Ascending aorta (tissue), 2 donors: ENCODE measurements at regions of chr20 and their contacts with region 1.

Region 1: GRCh38 chr20:63707549-63708300 is at the starts of genes ARFRP1 and ZGPAT:
- DNase-seq: peak in 1 of 2 donors; percentile 94
- H3K4me3 ChIP-seq: peak within 1 kb of the TSS; percentile 80 to 88
- H3K27ac ChIP-seq: peak within 1 kb of the TSS; percentile 86 to 94
- H3K4me1 ChIP-seq: peaks cover 6 to 14% of the 10 kb centered on the region in 2 donors
- H3K27me3 ChIP-seq: no peaks in the 10 kb centered on the region
- CTCF ChIP-seq: no peak
- total RNA-seq, gene ARFRP1: 50.8 TPM
- total RNA-seq, gene ZGPAT: 42.4 TPM

Region 2: DNA sequence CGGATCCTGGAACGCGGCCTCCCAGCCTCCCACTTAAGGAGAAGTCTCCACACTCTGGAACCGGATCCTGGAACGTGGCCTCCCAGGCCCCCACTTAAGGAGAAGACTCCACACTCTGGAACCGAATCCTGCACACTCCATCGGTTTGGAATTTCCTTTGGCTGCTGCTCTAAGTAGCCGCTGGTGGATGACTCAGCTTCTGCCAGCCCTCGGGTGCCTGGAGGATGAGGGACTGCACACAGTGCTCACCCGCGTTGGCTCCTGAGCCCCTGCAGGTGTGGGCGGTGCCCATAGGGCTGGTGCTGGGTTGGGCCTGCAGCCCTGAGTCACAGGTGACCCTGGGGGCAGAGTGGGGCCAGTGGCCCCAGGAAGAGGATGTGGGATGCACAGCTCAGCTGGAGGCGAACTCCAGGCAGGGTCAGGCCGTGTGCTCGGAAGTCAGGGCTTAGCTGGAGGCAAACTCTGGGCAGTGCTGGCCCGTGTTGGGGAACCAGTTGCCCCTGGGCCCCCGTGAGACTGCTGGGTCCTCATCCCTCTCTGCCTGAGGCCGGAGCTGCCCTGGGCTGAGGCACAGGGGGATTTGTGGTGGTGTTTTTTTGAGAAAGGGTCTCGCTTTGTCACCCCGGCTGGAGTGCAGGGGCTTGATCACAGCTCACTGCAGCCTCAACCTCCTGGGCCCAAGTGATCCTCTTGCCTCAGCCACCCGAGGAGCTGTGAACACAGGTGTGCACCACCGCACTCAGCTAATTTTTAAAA is 25.2 kb before region 1 on chr20:
- intact Hi-C with region 1: loop called (anchors 2 kb)
- DNase-seq: peak; percentile 79 to 93
- H3K4me3 ChIP-seq: peak overlapping the region in 1 of 2 donors; percentile 29
- H3K27ac ChIP-seq: peak overlapping the region; percentile 90 to 98
- H3K4me1 ChIP-seq: peaks cover 11 to 31% of the 10 kb centered on the region in 2 donors
- H3K27me3 ChIP-seq: no peaks in the 10 kb centered on the region
- CTCF ChIP-seq: no peak

Region 3: GRCh38 chr20:63692669-63693426 is 14.9 kb before region 1 on chr20:
- intact Hi-C with region 1: no loop called
- DNase-seq: no peak
- H3K4me3 ChIP-seq: no peak overlapping the region
- H3K27ac ChIP-seq: no peak overlapping the region
- H3K4me1 ChIP-seq: peaks cover 0 to 8% of the 10 kb centered on the region in 2 donors
- H3K27me3 ChIP-seq: no peaks in the 10 kb centered on the region
- CTCF ChIP-seq: no peak

Region 4: GRCh38 chr20:63732102-63733095 is 24.7 kb after region 1 on chr20:
- intact Hi-C with region 1: no loop called
- DNase-seq: no peak
- H3K4me3 ChIP-seq: no peak overlapping the region
- H3K27ac ChIP-seq: no peak overlapping the region
- H3K4me1 ChIP-seq: no peaks in the 10 kb centered on the region
- H3K27me3 ChIP-seq: no peaks in the 10 kb centered on the region
- CTCF ChIP-seq: no peak